Panc1 (cell line): ENCODE measurements at regions of chr2 and their contacts with region 1.

Region 1: DNA sequence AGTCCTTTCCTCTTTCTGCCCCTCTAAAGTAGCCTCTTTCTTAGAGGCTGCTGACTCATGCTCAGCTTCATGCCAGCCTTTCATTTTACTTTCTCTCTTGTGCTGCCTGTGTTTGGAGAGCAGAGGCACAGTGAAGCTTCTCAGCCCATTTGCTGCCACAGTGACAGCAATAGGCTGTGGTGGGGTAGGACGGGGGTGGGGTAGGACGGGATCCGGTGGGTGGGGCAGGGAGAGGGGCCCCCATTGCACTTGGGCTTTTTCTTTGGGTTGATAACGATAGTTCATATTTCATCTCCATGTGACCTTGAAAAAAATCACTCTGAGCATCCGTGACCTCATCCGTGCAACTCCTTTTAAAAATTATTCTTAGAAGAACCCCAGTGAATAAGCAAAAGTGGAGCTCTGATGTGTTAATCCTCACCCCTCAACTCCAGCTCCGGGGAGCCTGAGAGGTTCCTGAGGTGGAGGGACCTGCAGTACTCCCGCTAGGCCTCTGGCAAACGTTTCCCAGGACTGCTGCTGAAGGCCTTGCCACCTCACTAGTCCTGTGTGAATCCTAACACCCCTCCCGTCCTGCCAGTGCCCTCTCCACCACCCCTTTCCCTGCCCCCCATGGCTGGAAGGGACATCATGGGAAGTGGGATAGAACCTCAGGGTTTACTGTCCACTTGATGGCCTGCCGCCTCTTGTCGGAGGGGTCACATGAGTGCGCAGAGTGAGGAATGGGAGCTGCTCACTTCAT is 70.8 kb downstream of the INPP4A start:
- DNase-seq: no peak
- ATAC-seq: no peak
- H3K4me3 ChIP-seq: no peak overlapping the region
- H3K27ac ChIP-seq: no peak overlapping the region
- H3K4me1 ChIP-seq: peaks cover 2% of the 10 kb centered on the region; the same call in 1 of the 2 replicates
- H3K27me3 ChIP-seq: no peaks in the 10 kb centered on the region
- CTCF ChIP-seq: no peak

Region 2: DNA sequence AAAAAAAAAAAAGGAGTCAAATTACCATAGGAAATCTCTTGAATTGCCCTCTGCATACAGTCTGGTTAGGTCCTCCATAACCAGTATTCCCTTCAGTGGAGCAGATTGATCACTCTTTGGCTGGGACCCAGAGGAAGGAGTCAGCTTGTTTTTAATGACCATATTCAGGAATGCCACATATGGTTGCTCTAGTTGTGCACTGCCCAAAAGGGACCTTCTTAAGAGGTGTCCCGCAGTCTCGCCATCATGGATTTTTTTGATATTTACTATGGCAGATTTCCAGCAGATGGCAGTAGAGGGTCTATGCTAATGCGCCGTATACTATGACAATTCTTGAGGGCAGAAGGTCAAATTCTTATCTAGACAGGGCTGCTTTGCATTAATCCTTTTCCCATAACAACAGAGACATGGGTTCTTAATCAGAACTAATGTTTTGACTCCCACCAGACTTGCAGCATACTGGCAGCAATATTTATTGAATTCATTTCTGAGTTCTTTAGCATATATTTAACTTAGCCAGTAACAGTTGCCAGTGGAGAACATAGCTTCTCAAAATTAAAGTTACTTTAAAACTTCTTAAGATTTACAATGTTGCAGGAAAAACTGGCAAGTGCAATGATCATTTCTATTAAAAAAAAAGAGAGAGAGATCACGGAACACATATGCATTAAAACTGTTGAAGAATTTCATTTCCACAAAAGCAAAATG is 102.5 kb before region 1 on chr2:
- CTCF ChIA-PET with region 1: no interaction called
- POLR2A ChIA-PET with region 1: no interaction called
- in situ Hi-C with region 1: no loop called
- intact Hi-C with region 1: no loop called
- DNase-seq: peak; percentile 46
- ATAC-seq: peak; percentile 91
- H3K4me3 ChIP-seq: no peak overlapping the region
- H3K27ac ChIP-seq: no peak overlapping the region
- H3K4me1 ChIP-seq: no peaks in the 10 kb centered on the region
- H3K27me3 ChIP-seq: peaks cover 13% of the 10 kb centered on the region
- CTCF ChIP-seq: peak; percentile 83

Region 3: GRCh38 chr2:98487806-98488651 is 27.4 kb before region 1 on chr2:
- CTCF ChIA-PET with region 1: no interaction called
- POLR2A ChIA-PET with region 1: no interaction called
- in situ Hi-C with region 1: no loop called
- intact Hi-C with region 1: no loop called
- DNase-seq: peak; percentile 20
- ATAC-seq: peak; percentile 63; the same call in 1 of the 2 replicates
- H3K4me3 ChIP-seq: no peak overlapping the region
- H3K27ac ChIP-seq: no peak overlapping the region
- H3K4me1 ChIP-seq: no peaks in the 10 kb centered on the region
- H3K27me3 ChIP-seq: no peaks in the 10 kb centered on the region
- CTCF ChIP-seq: peak; percentile 68

Region 4: DNA sequence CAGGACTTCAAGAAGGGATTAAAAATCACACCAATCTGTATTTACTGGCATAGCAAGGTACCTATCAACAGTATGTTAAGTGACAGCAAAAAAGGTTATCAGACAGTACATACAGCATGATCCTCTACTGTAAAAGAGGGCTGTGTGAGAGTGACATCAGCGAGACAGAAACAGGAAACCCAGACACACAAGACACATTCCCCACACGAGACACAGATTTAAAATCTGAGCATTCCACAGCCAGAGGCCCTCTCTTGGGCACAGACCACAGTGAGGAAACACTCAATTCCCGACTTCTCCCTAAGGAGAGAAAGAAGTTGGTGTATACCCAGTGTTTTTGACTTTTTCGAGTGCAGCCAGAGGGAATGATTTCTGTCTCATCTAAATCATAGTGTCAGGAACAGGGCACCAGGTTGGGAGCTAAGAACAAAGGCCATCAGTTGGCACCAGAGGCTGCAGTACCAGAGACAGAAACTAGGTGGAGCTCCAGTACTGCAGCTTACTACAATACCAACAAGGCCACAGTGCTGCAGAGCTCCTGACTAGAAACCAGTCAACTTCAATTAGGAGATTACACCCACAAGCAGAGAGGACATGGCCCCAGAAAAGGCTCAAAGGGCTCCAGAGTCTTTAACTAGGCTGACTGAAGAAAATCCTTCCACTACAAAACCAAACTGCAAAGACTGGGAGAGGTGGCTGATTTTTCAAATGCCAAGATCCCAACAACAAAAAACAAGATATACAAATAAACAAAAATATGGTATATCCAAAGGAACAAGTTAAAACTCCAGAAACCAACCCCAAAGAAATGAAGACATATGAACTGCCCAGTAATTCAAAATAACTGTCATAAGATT is 133.9 kb after region 1 on chr2:
- CTCF ChIA-PET with region 1: no interaction called
- POLR2A ChIA-PET with region 1: no interaction called
- in situ Hi-C with region 1: no loop called
- intact Hi-C with region 1: no loop called
- DNase-seq: peak; percentile 73
- ATAC-seq: peak; percentile 99
- H3K4me3 ChIP-seq: no peak overlapping the region
- H3K27ac ChIP-seq: no peak overlapping the region
- H3K4me1 ChIP-seq: no peaks in the 10 kb centered on the region
- H3K27me3 ChIP-seq: no peaks in the 10 kb centered on the region; the same call in 1 of the 2 replicates
- CTCF ChIP-seq: peak; percentile 98

Region 5: GRCh38 chr2:98664327-98664726 is 148.9 kb after region 1 on chr2:
- CTCF ChIA-PET with region 1: interaction called, 10 read pairs
- POLR2A ChIA-PET with region 1: no interaction called
- in situ Hi-C with region 1: no loop called
- intact Hi-C with region 1: no loop called
- DNase-seq: no peak
- ATAC-seq: no peak
- H3K4me3 ChIP-seq: no peak overlapping the region
- H3K27ac ChIP-seq: no peak overlapping the region
- H3K4me1 ChIP-seq: no peaks in the 10 kb centered on the region
- H3K27me3 ChIP-seq: no peaks in the 10 kb centered on the region
- CTCF ChIP-seq: no peak